Activated CD4-positive, alpha-beta T cell treated with anti-CD3 and anti-CD28 coated beads, Interleukin-2, amount 10 ng/mL, durations not matched to agents 7 days and 5 days (primary cell): ENCODE measurements at regions of chr9 and their contacts with region 1.

Region 1: DNA sequence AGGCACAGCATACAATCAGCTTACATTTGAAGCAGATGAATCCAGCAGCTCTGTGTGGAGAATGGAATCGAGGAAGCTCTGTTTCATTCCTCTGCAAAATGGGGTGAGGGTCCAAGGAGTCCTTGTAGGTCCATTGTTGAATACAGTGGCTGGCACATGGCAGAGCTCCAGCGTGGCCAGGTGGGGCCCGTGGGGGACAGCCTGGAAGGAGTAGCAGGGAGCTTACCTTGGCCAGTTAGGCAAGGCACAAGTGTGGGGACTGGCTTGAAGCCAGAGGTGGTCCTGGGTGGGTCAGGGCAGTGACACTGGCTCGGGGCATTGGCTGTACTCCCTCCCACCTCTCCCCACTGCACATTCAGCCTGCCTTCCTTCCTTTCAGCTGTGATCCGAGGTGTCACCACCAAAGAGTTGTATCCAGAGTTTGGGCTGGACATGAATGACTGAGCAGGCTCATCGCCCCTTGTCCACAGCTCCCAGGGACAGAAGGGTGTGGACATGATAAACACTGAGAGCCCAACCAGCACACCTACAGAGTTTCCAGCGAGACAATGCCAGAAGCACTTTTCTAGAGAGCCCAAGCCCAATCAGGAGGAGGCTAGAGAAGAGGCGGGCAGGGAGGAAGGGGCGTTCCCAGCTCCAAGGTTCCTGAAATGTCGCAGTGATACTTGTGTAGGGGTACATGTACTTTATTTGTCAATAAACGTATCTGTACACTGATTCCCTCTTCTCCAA is 12.4 kb downstream of the SWI5 start:
- DNase-seq: no peak
- H3K4me3 Mint-ChIP-seq: no peak overlapping the region
- H3K27ac Mint-ChIP-seq: no peak overlapping the region
- H3K4me1 Mint-ChIP-seq: no peaks in the 10 kb centered on the region
- H3K27me3 Mint-ChIP-seq: no peaks in the 10 kb centered on the region

Region 2: DNA sequence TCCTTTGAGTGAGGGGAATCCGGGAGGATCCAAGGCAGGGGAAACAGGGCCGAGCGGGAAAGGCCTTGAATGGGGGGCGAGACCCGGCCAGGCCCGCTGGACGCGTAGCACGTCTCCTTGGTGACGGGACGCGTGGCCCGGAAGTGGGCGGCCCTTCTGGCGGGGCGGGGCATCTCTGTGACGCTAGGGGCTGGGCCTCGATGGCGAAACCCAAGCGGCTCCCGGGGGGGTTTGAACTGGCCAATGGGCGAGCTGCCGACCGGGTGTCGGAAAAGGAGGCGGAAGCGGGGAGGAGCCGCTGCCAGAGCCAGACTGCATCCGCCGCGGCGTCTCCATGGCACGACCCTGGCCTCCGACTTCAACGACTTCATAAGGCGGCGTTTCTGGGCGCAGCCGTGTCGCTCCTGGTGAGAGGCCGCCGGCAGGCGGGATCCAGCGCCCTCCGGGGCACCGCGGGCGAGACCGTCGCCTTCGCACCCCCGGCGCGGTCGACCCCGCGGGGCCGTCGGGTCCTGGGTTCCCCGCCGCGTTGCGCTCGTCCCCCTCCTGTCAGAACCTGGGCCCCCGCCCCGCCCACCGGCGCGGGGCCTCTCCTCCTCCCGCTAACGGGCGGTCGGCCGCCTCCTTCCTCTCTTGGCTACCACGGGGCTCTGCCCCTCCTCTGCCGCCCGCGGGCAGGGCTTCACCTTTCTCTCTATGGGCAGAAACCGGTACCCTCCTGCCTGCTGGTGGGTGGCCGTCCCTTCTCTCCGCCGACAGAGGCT is 167.6 kb after region 1 on chr9 and contains the start of gene ODF2:
- CTCF ChIA-PET with region 1: no interaction called
- POLR2A ChIA-PET with region 1: interaction called, 13 read pairs
- DNase-seq: peak; percentile 99
- H3K4me3 Mint-ChIP-seq: peak within 1 kb of the TSS; percentile 93
- H3K27ac Mint-ChIP-seq: peak within 1 kb of the TSS; percentile 94
- H3K4me1 Mint-ChIP-seq: peaks cover 36% of the 10 kb centered on the region
- H3K27me3 Mint-ChIP-seq: no peaks in the 10 kb centered on the region
- total RNA-seq, gene ODF2: 64.9 to 68.4 TPM